BJ (cell line): ENCODE measurements at regions of chr7 and their contacts with region 1.

Region 1: DNA sequence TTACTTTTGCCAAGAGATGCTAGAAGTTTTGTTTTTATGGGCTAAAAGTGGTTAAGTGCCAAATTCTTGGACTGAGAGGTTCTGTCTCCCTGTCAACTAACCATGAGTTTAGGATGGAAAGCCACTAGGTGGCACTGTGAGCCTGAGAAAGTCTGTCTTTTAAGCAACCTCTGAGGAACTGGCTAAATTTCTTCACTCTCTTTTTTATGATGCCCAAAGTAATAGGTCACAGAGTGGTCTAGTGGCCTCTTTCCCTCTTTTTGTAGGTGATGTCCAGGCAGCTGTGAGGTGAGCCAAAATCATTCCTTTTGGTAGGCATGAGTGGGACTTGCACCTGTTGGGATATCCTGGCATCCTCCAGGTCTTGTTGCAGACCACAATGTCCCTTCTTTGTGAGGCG is 56.8 kb downstream of the SND1 start:
- DNase-seq: peak; percentile 86
- H3K4me3 ChIP-seq: no peak overlapping the region
- H3K27me3 ChIP-seq: no peaks in the 10 kb centered on the region
- CTCF ChIP-seq: peak; percentile 66

Region 2: GRCh38 chr7:127588019-127588696 is 120.6 kb before region 1 on chr7 and contains the start of gene ARF5:
- CTCF ChIA-PET with region 1: interaction called, 12 read pairs
- POLR2A ChIA-PET with region 1: interaction called, 5 read pairs
- DNase-seq: no peak
- H3K4me3 ChIP-seq: peak within 1 kb of the TSS; percentile 63
- H3K27me3 ChIP-seq: no peaks in the 10 kb centered on the region
- CTCF ChIP-seq: no peak
- polyA plus RNA-seq, gene ARF5: 208 and 216 TPM in 2 replicates

Region 3: DNA sequence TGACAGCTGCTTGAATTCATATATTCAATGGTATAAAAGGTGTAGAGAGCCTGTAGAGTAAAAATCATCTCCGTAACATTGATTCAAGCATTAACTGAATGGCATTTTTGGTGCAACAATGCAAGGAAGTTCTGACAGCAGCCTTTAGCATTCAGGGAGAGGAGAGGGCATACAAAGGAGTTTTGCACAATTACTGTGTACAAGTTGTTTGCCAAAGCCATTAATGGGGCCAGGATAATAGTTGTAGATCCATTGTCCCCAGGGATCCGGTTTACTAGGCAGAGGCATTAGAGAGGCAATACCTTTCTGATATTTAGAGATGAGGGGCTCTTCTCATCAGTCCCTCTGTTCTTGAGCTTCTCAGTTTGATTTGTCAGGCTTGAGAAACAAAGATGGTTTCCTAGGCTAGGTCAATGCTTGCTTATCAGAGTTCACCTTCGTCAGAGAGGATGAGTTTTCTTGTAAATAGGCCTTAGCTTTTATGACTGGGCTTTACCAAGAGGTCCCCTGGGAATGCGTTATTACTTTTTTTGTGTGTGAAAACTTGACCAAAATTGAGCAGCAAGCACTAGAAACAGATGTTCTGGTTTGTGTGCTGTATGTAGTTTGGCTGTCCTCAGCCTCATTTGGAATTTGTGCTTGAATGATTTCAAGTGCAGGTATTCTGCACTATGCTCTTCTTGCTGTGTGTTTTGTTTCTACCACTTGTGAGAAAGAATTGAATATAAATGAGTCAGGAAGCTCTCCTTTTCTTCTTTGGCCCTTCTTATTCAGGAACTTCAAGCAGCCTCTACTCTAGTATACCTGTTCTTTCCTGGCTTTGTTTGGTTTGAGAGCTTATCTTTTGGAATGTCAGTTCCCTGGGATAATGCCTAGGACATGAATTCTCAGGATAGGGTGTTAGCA is 24.8 kb before region 1 on chr7:
- CTCF ChIA-PET with region 1: no interaction called
- POLR2A ChIA-PET with region 1: no interaction called
- DNase-seq: no peak
- H3K4me3 ChIP-seq: no peak overlapping the region
- H3K27me3 ChIP-seq: no peaks in the 10 kb centered on the region
- CTCF ChIP-seq: no peak